Ascending aorta (tissue), 2 donors: ENCODE measurements at regions of chr4 and their contacts with region 1.

Region 1: DNA sequence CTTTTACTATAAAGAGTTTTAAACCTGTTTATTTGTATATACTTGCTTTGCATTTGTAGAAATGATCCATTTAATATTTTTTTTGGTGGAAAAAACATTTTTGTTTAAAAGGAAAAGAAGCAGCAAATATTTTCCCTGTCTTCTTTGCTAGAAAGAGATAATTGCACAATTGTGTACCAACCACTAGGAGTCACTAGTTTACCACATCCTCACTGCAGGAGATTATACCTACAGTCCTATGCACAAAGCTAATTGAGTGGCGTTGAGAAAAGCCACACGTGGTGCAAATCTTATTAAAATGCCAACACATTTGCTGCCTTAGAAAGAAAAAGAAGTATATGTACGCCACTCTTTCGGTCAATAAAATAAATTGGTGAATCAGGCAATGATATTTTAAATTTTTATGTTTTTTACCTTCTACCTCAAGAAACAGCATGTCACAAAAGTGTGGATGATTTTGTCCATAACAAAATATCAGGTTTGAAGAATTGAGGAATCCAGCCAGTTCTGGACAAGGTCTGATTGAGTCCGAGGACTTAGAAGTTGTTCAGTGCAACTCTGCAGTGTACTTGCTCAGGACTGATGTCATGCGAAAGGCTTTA is 102.9 kb downstream of the GRXCR1 start:
- DNase-seq: no peak
- H3K4me3 ChIP-seq: no peak overlapping the region
- H3K27ac ChIP-seq: no peak overlapping the region
- H3K4me1 ChIP-seq: no peaks in the 10 kb centered on the region
- H3K27me3 ChIP-seq: no peaks in the 10 kb centered on the region
- CTCF ChIP-seq: peak in 2 of 3 experiments; percentile 65 to 76

Region 2: DNA sequence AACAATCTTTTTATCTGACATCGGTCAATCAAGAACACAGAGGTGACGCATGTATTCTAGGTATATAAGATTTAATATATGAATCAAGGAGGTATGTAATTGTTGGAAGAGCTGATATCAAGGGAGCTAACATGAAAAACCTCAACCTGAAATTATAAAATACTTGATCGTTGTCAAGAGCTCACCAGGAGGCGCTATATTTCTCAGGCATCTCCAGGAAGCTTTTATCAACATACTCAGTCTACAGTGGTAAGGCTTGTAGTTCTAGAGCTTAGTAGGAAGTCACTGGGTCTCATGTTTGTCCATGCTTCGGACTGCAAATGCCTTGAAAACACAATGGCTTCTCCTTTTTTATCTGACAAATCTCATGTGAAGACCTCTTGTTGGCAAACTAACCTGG is 53.1 kb after region 1 on chr4:
- intact Hi-C with region 1: no loop called
- DNase-seq: no peak
- H3K4me3 ChIP-seq: no peak overlapping the region
- H3K27ac ChIP-seq: no peak overlapping the region
- H3K4me1 ChIP-seq: peaks cover 0 to 4% of the 10 kb centered on the region in 2 donors
- H3K27me3 ChIP-seq: no peaks in the 10 kb centered on the region
- CTCF ChIP-seq: no peak

Region 3: GRCh38 chr4:43132010-43132582 is 136.7 kb after region 1 on chr4:
- intact Hi-C with region 1: loop called (anchors 2 kb)
- DNase-seq: peak in 1 of 2 donors; percentile 65
- H3K4me3 ChIP-seq: no peak overlapping the region
- H3K27ac ChIP-seq: no peak overlapping the region
- H3K4me1 ChIP-seq: no peaks in the 10 kb centered on the region
- H3K27me3 ChIP-seq: no peaks in the 10 kb centered on the region
- CTCF ChIP-seq: peak; percentile 20 to 77 (median 68)